ENCODE measurements at regions of chr1 and their contacts with region 1.

Region 1: GRCh38 chr1:22922640-22923039 is 50.0 kb downstream of the LACTBL1 start:
- DNase-seq: no peak
- ATAC-seq: no peak

Region 2: DNA sequence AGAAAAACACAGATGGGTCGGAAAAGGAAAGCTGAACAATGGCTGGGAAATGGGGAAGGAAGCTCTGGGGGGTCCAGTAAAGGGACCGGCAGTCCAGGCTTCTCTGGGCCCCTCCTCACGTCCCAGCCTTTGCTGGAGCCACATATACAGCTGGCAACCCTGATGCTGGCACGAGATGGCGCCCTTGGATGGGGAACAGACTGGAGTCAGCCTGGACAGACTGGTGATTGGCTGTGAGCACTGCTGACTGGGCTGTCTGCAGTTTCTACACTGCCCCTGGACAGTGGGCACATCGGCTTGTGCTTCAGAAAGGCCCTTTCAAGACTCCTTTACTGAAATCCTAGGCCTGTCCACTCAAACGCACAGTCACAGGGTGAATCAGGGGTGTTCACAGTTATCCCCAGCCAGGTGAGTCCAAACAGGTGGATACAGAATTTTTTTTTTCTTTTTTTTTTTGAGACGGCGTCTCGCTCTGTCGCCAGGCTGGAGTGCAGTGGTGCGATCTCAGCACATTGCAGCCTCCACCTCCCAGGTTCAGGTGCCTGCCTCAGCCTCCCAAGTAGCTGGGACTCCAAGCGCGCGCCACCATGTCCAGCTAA is 502.1 kb before region 1 on chr1:
- intact Hi-C with region 1: loop called (anchors 10 kb)
- DNase-seq: peak; percentile 88
- ATAC-seq: peak; percentile 88

Region 3: GRCh38 chr1:22826604-22827580 is 95.7 kb before region 1 on chr1:
- intact Hi-C with region 1: loop called (anchors 5 kb)
- DNase-seq: no peak
- ATAC-seq: peak; percentile 79